Caco-2 (cell line): ENCODE measurements at regions of chr7 and their contacts with region 1.

Region 1: DNA sequence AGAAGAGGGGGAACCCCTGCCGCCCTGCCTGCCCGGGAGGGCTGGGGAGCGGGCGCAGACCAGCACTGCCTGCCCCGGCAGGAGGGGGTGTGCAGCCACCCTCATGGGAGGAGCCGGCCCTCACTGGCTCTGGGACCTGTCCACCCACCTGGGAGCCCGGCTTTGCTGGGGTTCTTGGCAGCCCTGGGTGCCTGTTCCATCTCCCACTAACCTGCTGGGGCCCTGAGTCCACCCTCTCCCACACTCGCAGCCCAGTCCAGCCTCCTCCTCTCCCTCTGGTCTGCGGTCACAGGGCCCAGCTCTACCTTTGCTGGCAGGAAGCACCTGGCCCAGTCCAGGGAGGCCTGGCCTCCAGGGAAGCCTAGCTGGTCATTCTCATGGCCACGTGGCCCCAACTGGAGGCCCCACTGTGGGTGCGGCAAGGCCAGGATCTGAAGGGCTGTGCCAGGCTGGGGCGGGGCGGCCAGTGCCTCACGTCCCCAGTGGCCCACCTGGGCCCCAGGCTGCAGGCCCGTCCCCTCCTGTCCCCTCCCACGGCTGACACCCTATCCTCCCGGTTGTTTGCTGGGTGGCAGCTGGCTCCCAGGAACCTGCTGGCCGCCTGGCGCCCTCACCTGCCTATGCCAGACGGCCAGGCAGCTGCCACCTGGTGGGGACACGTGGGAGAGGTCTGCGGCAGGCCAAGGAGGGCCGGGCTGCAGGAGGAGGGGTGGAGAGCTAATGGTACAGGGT is at the start of gene TMEM184A:
- DNase-seq: peak; percentile 86 to 87
- H3K4me3 ChIP-seq: peak within 1 kb of the TSS; percentile 45
- H3K4me3 Mint-ChIP-seq: peak within 1 kb of the TSS; percentile 89
- H3K27ac Mint-ChIP-seq: peak within 1 kb of the TSS; percentile 97
- H3K4me1 ChIP-seq: peaks cover 31% of the 10 kb centered on the region
- H3K4me1 Mint-ChIP-seq: peaks cover 24% of the 10 kb centered on the region
- H3K27me3 ChIP-seq: no peaks in the 10 kb centered on the region
- H3K27me3 Mint-ChIP-seq: no peaks in the 10 kb centered on the region
- CTCF ChIP-seq: peak; percentile 74 to 84
- total RNA-seq, gene TMEM184A: 16.5 and 22.0 TPM in 2 replicates

Region 2: GRCh38 chr7:1331561-1332488 is 224.2 kb before region 1 on chr7:
- CTCF ChIA-PET with region 1: no interaction called
- POLR2A ChIA-PET with region 1: no interaction called
- intact Hi-C with region 1: no loop called
- DNase-seq: no peak
- H3K4me3 ChIP-seq: no peak overlapping the region
- H3K4me3 Mint-ChIP-seq: peak overlapping the region; percentile 17
- H3K27ac Mint-ChIP-seq: no peak overlapping the region
- H3K4me1 ChIP-seq: no peaks in the 10 kb centered on the region
- H3K4me1 Mint-ChIP-seq: no peaks in the 10 kb centered on the region
- H3K27me3 ChIP-seq: no peaks in the 10 kb centered on the region
- H3K27me3 Mint-ChIP-seq: no peaks in the 10 kb centered on the region
- CTCF ChIP-seq: no peak

Region 3: GRCh38 chr7:1503816-1504775 is 51.9 kb before region 1 on chr7 and contains the start of gene INTS1:
- CTCF ChIA-PET with region 1: interaction called, 3 read pairs
- POLR2A ChIA-PET with region 1: interaction called, 5 read pairs
- intact Hi-C with region 1: loop called (anchors 1 kb)
- DNase-seq: peak; percentile 94 to 96
- H3K4me3 ChIP-seq: peak within 1 kb of the TSS; percentile 100
- H3K4me3 Mint-ChIP-seq: peak within 1 kb of the TSS; percentile 88
- H3K27ac Mint-ChIP-seq: peak within 1 kb of the TSS; percentile 91
- H3K4me1 ChIP-seq: peaks cover 21% of the 10 kb centered on the region
- H3K4me1 Mint-ChIP-seq: peaks cover 10% of the 10 kb centered on the region
- H3K27me3 ChIP-seq: no peaks in the 10 kb centered on the region
- H3K27me3 Mint-ChIP-seq: no peaks in the 10 kb centered on the region
- CTCF ChIP-seq: peak; percentile 85 to 93
- total RNA-seq, gene INTS1: 122 and 124 TPM in 2 replicates

Region 4: GRCh38 chr7:1537535-1538412 is 18.2 kb before region 1 on chr7:
- CTCF ChIA-PET with region 1: interaction called, 28 read pairs
- POLR2A ChIA-PET with region 1: interaction called, 31 read pairs
- intact Hi-C with region 1: loop called (anchors 1 kb)
- DNase-seq: peak; percentile 52 to 54
- H3K4me3 ChIP-seq: peak overlapping the region; percentile 28
- H3K4me3 Mint-ChIP-seq: peak overlapping the region; percentile 65
- H3K27ac Mint-ChIP-seq: peak overlapping the region; percentile 88
- H3K4me1 ChIP-seq: peaks cover 42% of the 10 kb centered on the region
- H3K4me1 Mint-ChIP-seq: peaks cover 11% of the 10 kb centered on the region
- H3K27me3 ChIP-seq: no peaks in the 10 kb centered on the region
- H3K27me3 Mint-ChIP-seq: no peaks in the 10 kb centered on the region
- CTCF ChIP-seq: no peak